ENCODE measurements at regions of chr17 and their contacts with region 1.

Region 1: DNA sequence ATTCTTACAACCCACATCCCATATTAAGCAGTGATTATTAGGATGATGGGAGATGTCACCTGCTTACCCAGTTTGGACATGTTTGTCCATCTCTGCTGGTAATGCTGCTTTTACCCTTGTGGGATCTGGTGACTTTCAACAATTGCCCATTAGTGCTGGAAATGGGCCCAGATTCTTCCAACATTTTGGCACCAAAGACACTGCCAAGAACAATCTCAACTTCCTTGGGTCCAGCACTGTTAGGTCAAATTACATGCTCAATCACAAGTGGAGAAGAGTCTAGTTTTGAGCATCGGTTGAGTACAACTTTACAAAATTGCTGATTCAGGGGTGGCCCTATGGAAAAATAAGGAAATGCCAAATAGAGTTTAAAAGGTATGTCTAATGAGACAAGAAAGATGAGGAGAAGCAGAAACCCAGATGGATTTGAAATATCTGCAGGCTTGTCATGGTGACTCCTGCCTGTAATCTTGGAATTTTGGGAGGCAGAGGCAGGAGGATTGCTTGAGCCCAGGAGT is 13.0 kb upstream of the ZFP3 start:
- DNase-seq: no peak
- ATAC-seq: no peak
- H3K4me3 Mint-ChIP-seq: no peak overlapping the region
- H3K27ac Mint-ChIP-seq: no peak overlapping the region
- H3K4me1 Mint-ChIP-seq: peaks cover 3% of the 10 kb centered on the region
- H3K27me3 Mint-ChIP-seq: peaks cover 4% of the 10 kb centered on the region

Region 2: DNA sequence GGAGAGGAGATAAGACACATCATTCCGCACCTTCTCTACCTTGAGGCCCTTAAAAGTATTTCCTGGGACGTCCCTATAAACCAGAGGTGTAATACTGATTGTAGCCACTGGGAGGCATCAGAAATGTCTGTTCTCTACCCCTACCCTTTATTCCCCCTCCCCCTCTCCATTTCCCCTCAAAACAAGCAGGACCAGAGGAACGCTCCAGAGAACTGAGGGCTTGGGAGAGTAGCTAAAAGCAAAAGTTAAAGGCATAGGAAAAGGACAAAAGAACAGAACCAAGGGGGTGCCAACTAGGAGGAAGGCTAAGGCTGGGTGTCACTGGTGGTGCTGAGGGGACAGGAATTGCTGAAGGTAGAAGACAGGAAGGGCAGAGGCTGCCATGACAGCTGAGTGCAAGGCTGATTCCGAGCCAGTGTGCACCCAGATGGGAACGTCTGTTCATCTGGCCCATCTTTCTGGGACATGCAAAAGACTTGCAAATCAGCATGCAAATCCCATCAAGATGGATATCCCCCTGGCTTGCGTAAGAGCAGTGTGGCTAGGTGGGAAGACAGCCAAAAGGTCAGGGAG is 84.6 kb before region 1 on chr17:
- CTCF ChIA-PET with region 1: interaction called, 23 read pairs
- POLR2A ChIA-PET with region 1: no interaction called
- DNase-seq: peak; percentile 70
- ATAC-seq: peak; percentile 70
- H3K4me3 Mint-ChIP-seq: no peak overlapping the region
- H3K27ac Mint-ChIP-seq: peak overlapping the region; percentile 75
- H3K4me1 Mint-ChIP-seq: peaks cover 21% of the 10 kb centered on the region
- H3K27me3 Mint-ChIP-seq: no peaks in the 10 kb centered on the region

Region 3: DNA sequence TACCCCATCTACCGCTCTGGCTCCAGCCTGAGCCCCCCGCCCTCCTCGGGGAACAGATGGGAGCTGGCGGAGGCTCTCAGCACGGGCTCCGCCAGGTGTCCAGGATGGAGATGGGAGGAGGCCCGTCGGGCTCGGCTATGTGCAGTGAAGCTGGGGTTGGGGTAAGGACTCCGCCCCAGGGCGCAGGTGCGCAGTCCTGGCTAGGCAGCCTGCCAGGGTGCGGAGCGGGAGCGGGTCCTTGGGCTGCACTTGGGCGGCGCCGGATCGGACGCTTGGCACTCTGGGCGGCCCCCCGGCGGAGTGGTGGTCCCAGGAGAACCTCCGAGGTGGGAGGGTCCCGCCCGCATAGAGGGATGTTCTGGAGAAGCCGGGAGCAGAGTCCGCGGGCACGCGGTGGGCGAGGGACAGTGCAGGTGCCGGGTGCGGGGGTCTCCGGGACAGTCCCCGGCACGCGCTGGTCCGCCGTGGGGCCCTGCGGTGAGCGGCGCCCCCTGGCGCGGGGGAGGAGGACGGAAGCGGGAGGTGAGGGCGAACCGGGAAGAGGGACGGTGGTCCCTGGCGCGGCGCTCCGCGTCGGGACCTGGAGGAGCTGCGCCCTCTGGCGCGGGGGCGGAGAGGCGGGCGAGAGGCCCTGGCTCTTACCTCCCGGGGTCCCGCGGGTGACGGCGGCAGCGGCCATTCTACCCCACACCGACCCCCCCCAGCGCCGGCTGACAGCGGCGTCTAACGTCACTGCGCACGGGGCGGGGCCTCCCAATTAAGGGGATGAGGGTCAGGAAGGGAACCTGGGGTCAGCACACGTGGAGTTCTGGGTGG is 78.1 kb before region 1 on chr17 and contains the start of gene CAMTA2:
- CTCF ChIA-PET with region 1: interaction called, 23 read pairs
- POLR2A ChIA-PET with region 1: no interaction called
- DNase-seq: peak; percentile 91
- ATAC-seq: peak; percentile 89
- H3K4me3 Mint-ChIP-seq: peak within 1 kb of the TSS; percentile 88
- H3K27ac Mint-ChIP-seq: peak within 1 kb of the TSS; percentile 92
- H3K4me1 Mint-ChIP-seq: peaks cover 41% of the 10 kb centered on the region
- H3K27me3 Mint-ChIP-seq: no peaks in the 10 kb centered on the region
- total RNA-seq, gene CAMTA2: 51.3 to 55.5 TPM

Region 4: DNA sequence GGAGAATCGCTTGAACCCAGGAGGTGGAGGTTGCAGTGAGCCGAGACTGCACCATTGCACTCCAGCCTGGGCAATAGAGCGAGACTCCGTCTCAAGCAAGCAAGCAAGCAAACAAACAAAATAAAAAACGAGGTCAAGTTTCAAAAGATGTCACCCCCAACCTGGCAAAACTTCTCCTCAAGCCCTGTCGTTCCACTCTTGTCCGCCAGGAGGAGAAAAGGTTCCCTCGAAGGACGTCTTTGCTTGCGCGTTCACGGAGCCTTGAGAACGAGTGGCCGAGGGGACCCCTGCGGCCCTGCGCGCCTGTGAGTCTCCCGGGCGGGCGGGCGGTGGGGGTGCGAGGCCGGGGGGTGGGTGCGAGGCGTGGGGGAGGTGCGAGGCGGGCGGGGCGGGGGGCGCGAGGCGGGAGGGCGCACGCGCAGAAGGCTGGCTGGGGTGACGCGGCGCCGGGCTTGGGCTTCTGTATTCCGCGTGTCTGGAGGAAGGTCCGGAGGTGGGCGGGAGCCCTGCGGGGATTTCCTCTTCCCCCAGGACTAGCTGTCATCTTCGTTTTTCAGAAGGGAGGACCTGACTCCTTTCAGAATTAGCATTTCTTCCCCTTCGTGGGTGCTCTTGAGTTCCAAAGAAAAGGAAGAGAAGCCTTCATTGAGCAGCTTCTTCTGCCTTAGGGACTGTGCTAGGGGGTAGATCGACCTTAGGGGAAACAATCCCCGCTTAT is 33.8 kb before region 1 on chr17:
- CTCF ChIA-PET with region 1: interaction called, 87 read pairs
- POLR2A ChIA-PET with region 1: no interaction called
- DNase-seq: peak; percentile 89
- ATAC-seq: peak; percentile 80
- H3K4me3 Mint-ChIP-seq: peak overlapping the region; percentile 81
- H3K27ac Mint-ChIP-seq: peak overlapping the region; percentile 86
- H3K4me1 Mint-ChIP-seq: peaks cover 17% of the 10 kb centered on the region
- H3K27me3 Mint-ChIP-seq: peaks cover 3% of the 10 kb centered on the region

Region 5: DNA sequence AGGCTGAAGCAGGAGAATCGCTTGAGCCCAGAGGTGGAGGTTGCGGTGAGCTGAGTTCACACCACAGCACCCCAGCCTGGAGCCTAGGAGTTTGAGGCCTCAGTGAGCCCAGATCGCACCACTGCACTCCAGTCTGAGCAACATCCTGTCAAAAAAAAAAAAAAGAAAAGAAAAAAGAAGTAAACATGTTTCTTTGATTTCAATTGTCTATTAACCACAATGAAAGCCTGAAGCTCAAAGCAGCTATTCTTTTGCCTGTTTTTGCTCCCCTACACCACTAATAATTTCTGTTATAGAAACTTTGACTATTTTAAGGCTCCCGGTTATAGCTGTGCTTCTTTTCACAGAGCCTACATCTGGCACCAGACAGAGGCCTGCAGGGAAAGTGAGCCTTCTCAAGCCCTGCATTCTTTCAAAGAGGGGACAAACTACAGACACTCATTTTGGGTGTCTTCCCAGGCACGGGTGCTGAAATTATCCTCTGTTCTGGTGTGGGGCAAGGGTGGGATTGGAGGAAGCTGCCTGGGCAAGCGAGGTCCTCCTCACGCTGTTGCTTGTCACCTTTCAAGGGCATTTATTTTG is 15.9 kb before region 1 on chr17:
- CTCF ChIA-PET with region 1: interaction called, 15 read pairs
- POLR2A ChIA-PET with region 1: no interaction called
- DNase-seq: peak; percentile 77
- ATAC-seq: peak; percentile 95
- H3K4me3 Mint-ChIP-seq: no peak overlapping the region
- H3K27ac Mint-ChIP-seq: peak overlapping the region; percentile 79
- H3K4me1 Mint-ChIP-seq: peaks cover 51% of the 10 kb centered on the region
- H3K27me3 Mint-ChIP-seq: no peaks in the 10 kb centered on the region

Region 6: GRCh38 chr17:5097101-5097834 is 32.0 kb after region 1 on chr17:
- CTCF ChIA-PET with region 1: no interaction called
- POLR2A ChIA-PET with region 1: no interaction called
- DNase-seq: peak; percentile 29
- ATAC-seq: no peak
- H3K4me3 Mint-ChIP-seq: peak overlapping the region; percentile 12
- H3K27ac Mint-ChIP-seq: no peak overlapping the region
- H3K4me1 Mint-ChIP-seq: peaks cover 10% of the 10 kb centered on the region
- H3K27me3 Mint-ChIP-seq: peaks cover 25% of the 10 kb centered on the region

Measured in activated CD8-positive, alpha-beta T cell treated with anti-CD3 and anti-CD28 coated beads, Interleukin-2, amount 10 ng/mL, durations not matched to agents 7 days and 5 days (primary cell).